PC-3 (cell line): ENCODE measurements at regions of chr3 and their contacts with region 1.

Region 1: GRCh38 chr3:150278195-150278594 is 129.9 kb upstream of the TSC22D2 start:
- DNase-seq: no peak
- ATAC-seq: no peak
- H3K4me3 ChIP-seq: no peak overlapping the region
- H3K27ac ChIP-seq: no peak overlapping the region
- H3K4me1 ChIP-seq: no peaks in the 10 kb centered on the region
- H3K27me3 ChIP-seq: no peaks in the 10 kb centered on the region
- CTCF ChIP-seq: no peak

Region 2: DNA sequence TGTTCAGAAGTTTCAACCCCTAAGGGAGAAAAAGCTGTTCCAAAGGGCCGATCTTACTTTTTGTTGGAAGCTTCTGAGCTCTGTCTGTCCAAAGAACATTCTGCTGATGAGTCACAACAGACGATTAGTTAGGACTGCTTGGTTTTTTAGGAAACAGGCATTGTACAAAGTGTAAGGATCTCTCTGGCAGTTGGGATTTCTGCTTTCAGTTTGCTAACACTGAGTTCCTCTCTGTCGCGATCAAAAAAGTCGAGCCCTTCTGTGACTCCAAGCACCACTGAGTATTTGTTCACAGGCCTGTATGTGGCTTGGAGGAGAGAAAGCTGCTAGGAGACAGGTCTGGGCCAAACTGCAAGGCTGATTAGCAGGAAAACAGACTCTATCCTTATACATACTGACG is 215.7 kb before region 1 on chr3:
- CTCF ChIA-PET with region 1: no interaction called
- POLR2A ChIA-PET with region 1: no interaction called
- intact Hi-C with region 1: no loop called
- DNase-seq: no peak
- ATAC-seq: peak; percentile 64
- H3K4me3 ChIP-seq: no peak overlapping the region
- H3K27ac ChIP-seq: no peak overlapping the region
- H3K4me1 ChIP-seq: no peaks in the 10 kb centered on the region
- H3K27me3 ChIP-seq: no peaks in the 10 kb centered on the region
- CTCF ChIP-seq: no peak

Region 3: DNA sequence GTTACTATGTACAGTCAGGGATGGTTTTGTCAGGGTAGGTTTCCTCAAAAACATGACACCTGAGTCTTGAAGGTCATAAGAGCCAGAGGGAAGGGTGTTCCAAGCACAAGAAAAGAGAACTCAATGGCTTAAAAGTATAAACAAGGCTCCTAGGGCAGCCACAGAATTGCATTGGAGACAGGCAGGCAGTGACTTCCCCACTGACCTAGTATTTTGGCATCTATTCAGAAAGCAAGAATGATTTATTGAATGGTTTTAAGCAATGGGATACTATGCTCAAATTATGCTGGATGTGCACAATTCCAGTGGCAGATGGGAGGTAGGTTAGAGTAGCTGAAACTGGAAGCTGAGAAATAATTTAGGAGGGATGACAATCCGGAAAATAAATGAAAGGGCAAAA is 183.9 kb after region 1 on chr3:
- CTCF ChIA-PET with region 1: no interaction called
- POLR2A ChIA-PET with region 1: interaction called, 12 read pairs
- intact Hi-C with region 1: no loop called
- DNase-seq: no peak
- ATAC-seq: no peak
- H3K4me3 ChIP-seq: no peak overlapping the region
- H3K27ac ChIP-seq: peak overlapping the region; percentile 60; the same call in 1 of the 2 replicates
- H3K4me1 ChIP-seq: peaks cover 33% of the 10 kb centered on the region
- H3K27me3 ChIP-seq: no peaks in the 10 kb centered on the region
- CTCF ChIP-seq: no peak